Endothelial cell of umbilical vein (primary cell): ENCODE measurements at regions of chr14 and their contacts with region 1.

Region 1: DNA sequence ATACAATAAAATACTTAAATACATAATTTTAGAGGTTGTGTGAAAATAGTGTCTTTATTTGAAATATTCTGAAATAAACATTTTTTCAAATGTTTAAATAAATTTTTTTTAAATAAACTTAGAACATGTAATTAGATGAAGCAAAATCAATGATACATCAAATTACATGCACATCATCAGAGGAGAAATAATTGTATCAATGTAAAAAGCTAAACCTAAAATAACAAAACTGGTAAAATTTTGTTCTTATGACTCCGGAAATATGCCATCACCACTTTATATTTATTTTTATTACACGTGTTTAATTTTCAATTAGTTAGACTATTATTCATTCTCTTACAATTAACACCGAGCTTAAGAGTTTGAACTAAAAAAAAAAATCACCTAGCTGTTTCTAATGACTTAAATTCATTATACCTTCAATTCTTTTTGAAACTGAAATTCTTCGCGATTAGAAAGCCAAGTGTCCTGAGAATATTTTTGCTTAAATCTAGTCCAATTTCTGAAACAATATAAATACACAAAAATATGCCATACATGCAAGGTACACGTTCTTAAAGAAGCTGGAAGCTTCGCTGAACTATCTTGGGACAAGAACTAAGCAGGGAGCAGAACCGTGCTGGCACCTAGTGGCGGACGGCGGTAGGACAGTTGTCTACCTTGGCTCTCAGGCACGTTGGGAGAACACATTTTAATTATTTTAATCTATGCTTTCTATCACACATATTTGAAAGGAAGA is 230.5 kb downstream of the SLC25A21 start:
- DNase-seq: peak; percentile 82
- H3K4me3 ChIP-seq: no peak overlapping the region
- H3K27ac ChIP-seq: no peak overlapping the region
- H3K4me1 ChIP-seq: no peaks in the 10 kb centered on the region
- H3K27me3 ChIP-seq: no peaks in the 10 kb centered on the region
- CTCF ChIP-seq: peak; percentile 84 to 89
- POLR2A ChIP-seq: no peak

Region 2: DNA sequence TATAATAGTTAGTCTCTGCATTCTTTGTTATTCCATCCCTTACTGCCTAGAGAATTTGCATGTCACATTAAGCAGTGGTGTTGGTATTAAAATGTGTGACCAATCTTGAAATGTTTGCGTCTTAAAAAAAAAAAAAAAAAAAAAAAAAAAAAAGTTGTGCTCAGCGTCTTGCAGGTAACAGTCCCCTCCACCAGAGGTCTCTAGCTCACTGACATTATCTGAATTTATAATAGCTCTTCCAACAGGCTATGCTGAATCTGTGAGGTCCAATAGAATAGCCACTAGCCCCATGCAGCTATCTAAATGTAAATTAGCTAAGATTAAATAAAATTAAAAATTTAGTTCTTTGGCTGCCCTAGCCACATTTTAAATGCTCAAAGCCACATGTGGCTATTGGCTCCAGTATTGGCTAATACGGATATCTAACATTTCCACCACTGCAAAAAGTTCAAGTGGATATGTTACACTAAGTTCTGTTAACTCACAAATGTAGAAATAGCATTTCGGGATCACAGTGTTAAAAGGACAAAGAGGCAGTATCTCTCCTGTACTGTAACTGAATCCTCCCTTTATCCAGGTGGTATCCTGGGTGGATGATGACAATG is 388.2 kb before region 1 on chr14:
- CTCF ChIA-PET with region 1: interaction called, 100 read pairs
- POLR2A ChIA-PET with region 1: no interaction called
- dilution Hi-C with region 1: no loop called
- intact Hi-C with region 1: loop called (anchors 2 kb)
- DNase-seq: peak; percentile 49
- H3K4me3 ChIP-seq: no peak overlapping the region
- H3K27ac ChIP-seq: no peak overlapping the region
- H3K4me1 ChIP-seq: no peaks in the 10 kb centered on the region
- H3K27me3 ChIP-seq: peaks cover 3 to 6% of the 10 kb centered on the region in 2 experiments
- CTCF ChIP-seq: peak; percentile 56 to 61
- POLR2A ChIP-seq: no peak

Region 3: DNA sequence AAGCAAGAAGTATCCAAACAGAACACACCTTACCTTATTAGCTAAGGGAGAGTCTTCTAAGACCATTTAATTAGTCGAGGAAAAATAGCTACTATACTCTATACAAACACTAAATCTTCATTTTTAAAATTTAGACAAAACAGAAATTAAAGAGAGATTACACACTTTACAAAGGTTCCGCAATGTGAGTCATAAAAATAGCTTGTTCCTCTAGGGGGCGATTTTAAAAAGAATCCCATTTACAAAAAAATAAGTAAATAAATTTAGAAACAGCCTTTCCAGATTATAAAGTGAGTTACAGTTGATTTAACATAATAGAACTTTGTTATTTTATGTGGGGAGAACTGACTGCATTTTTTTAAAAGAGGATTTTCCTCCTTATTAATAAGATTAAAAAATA is 78.7 kb before region 1 on chr14:
- CTCF ChIA-PET with region 1: interaction called, 11 read pairs
- POLR2A ChIA-PET with region 1: no interaction called
- dilution Hi-C with region 1: no loop called
- intact Hi-C with region 1: no loop called
- DNase-seq: no peak
- H3K4me3 ChIP-seq: no peak overlapping the region
- H3K27ac ChIP-seq: no peak overlapping the region
- H3K4me1 ChIP-seq: no peaks in the 10 kb centered on the region
- H3K27me3 ChIP-seq: peaks cover 0 to 2% of the 10 kb centered on the region in 2 experiments
- CTCF ChIP-seq: no peak
- POLR2A ChIP-seq: no peak

Region 4: GRCh38 chr14:36900846-36901245 is 41.1 kb before region 1 on chr14:
- CTCF ChIA-PET with region 1: no interaction called
- POLR2A ChIA-PET with region 1: no interaction called
- dilution Hi-C with region 1: no loop called
- intact Hi-C with region 1: no loop called
- DNase-seq: no peak
- H3K4me3 ChIP-seq: no peak overlapping the region
- H3K27ac ChIP-seq: no peak overlapping the region
- H3K4me1 ChIP-seq: no peaks in the 10 kb centered on the region
- H3K27me3 ChIP-seq: peaks cover 0 to 1% of the 10 kb centered on the region in 2 experiments
- CTCF ChIP-seq: no peak
- POLR2A ChIP-seq: no peak

Region 5: DNA sequence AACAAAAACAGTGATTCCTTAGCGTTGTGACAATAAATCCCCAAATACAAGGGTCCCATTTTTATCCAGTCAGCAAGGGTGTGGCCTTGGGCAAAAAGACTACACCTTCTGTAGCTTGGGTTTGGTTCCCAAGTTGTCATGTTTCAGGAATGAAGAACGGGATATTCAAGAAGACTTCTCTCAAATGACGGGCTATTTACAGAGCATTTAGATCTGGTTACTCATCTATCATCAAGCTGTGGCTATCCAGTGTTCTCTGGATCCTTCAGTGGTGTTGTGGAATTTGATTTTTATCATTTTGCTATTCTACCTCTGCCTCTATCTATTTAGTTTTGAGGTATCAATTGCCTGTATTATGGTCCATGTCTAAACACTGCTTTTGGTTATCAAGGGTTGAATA is 10.8 kb after region 1 on chr14:
- CTCF ChIA-PET with region 1: interaction called, 24 read pairs
- POLR2A ChIA-PET with region 1: no interaction called
- dilution Hi-C with region 1: no loop called
- intact Hi-C with region 1: no loop called
- DNase-seq: no peak
- H3K4me3 ChIP-seq: no peak overlapping the region
- H3K27ac ChIP-seq: no peak overlapping the region
- H3K4me1 ChIP-seq: no peaks in the 10 kb centered on the region
- H3K27me3 ChIP-seq: no peaks in the 10 kb centered on the region
- CTCF ChIP-seq: no peak
- POLR2A ChIP-seq: no peak

Region 6: GRCh38 chr14:36996133-36996856 is 54.3 kb after region 1 on chr14:
- CTCF ChIA-PET with region 1: interaction called, 3 read pairs
- POLR2A ChIA-PET with region 1: no interaction called
- dilution Hi-C with region 1: no loop called
- intact Hi-C with region 1: loop called (anchors 10 kb)
- DNase-seq: peak; percentile 21
- H3K4me3 ChIP-seq: no peak overlapping the region
- H3K27ac ChIP-seq: no peak overlapping the region
- H3K4me1 ChIP-seq: peaks cover 7% of the 10 kb centered on the region
- H3K27me3 ChIP-seq: no peaks in the 10 kb centered on the region
- CTCF ChIP-seq: no peak
- POLR2A ChIP-seq: no peak

Region 7: GRCh38 chr14:37060493-37061260 is 118.7 kb after region 1 on chr14:
- CTCF ChIA-PET with region 1: no interaction called
- POLR2A ChIA-PET with region 1: no interaction called
- dilution Hi-C with region 1: no loop called
- intact Hi-C with region 1: no loop called
- DNase-seq: no peak
- H3K4me3 ChIP-seq: no peak overlapping the region
- H3K27ac ChIP-seq: no peak overlapping the region
- H3K4me1 ChIP-seq: no peaks in the 10 kb centered on the region
- H3K27me3 ChIP-seq: no peaks in the 10 kb centered on the region
- CTCF ChIP-seq: no peak
- POLR2A ChIP-seq: no peak

Region 8: DNA sequence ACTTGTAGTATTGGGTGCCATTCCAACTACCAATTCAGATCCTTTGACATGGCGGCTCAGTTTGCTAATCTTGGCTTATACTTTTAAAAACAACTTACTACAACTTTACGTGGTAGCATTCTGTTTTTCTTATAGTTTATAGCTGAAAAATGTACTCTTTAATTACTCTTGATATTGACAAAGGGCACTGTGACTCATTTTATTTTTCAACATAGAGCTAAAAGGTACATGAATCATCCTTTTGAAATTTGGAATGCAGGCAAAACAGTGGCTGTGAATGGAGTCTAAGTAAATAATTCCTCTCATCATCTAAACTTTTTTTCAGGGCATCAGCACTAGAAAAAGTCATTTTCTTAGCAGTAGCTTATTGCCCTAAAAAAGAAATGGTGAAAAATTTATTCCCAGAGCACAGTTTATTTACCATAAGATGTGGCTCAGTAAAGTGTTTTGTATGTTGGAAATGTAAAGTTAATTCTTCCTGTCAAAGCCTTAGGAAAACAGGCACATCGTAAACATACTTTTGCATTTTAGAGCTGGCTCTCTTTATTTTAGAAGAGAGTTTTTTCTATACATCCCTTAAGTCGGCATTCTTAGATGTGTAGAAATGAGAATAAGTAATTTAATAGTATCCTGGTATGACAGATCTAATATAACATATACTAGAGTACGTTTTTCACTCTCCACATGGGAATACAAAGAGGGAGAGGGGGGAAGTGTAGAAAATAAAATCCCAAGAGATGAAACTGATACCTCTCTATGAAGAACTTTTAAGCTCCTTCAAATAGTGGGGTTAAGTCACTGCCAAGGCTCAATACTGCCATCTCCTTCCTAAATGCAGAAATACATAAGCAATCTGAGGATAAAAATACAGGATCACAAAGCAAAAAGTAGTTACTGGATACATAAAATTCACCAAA is 175.2 kb after region 1 on chr14:
- CTCF ChIA-PET with region 1: interaction called, 43 read pairs
- POLR2A ChIA-PET with region 1: no interaction called
- dilution Hi-C with region 1: no loop called
- intact Hi-C with region 1: loop called (anchors 2 kb)
- DNase-seq: peak; percentile 79
- H3K4me3 ChIP-seq: no peak overlapping the region
- H3K27ac ChIP-seq: peak overlapping the region; percentile 76
- H3K4me1 ChIP-seq: peaks cover 20% of the 10 kb centered on the region
- H3K27me3 ChIP-seq: no peaks in the 10 kb centered on the region
- CTCF ChIP-seq: peak; percentile 19 to 43
- POLR2A ChIP-seq: no peak